ENCODE measurements at regions of chr5 and their contacts with region 1.

Region 1: DNA sequence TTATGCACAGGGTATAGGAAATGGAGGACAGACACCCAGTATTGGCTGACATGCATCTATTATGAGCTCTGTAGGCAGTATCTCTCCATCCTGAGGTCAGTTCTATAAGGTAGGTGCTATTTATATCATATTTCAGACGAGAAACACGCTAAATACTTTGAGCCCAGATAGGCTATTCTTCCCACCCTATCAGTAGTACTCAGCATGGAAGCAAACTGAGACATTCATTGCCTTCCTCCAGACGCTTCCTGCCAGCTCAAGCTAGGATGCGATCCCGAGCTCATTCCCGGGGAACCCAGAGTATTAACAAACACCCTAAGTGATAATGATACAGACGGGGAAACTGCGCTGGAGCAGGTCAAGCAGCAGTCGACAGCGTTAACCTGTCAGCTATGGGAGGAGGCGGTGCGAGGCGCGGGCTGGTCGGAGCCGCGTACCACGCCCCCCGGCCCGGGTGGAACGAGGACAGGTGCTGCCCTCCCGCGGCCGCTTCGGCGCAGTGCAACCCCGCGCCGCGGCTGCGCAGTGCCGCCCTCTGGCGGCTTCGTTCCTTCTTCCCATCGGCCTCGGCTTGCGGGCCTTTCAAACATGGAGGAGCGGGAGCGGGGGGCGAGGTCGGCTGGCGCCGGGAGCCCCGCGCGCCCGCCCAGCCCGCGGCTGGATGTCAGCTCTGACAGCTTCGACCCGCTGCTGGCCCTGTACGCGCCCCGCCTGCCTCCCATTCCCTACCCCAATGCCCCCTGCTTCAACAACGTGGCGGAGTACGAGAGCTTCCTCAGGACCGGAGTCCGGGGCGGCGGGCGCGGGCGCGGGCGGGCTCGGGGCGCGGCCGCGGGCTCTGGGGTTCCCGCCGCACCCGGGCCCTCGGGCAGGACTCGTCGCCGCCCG is at the start of gene LSM11:
- DNase-seq: peak; percentile 69 to 98
- H3K4me3 ChIP-seq: peak within 1 kb of the TSS; percentile 49 to 85 (median 70)
- H3K27ac ChIP-seq: no peak within 1 kb of the TSS
- H3K4me1 ChIP-seq: peaks cover 0 to 7% (median 0%) of the 10 kb centered on the region in 4 experiments; a peak in 3 of 7 replicates
- H3K27me3 ChIP-seq: peaks cover 0 to 13% (median 7%) of the 10 kb centered on the region in 4 experiments; a peak in 5 of 7 replicates
- CTCF ChIP-seq: peak; percentile 97 to 100 (median 99)
- EP300 ChIP-seq: peak in 1 of 2 experiments; percentile 37; a peak in 1 of 3 replicates
- POLR2A ChIP-seq: peak in 1 of 2 experiments; percentile 19; a peak in 1 of 3 replicates
- RAD21 ChIP-seq: peak; percentile 86 to 92
- total RNA-seq, gene LSM11: 3.4 and 3.9 TPM in 2 replicates

Region 2: DNA sequence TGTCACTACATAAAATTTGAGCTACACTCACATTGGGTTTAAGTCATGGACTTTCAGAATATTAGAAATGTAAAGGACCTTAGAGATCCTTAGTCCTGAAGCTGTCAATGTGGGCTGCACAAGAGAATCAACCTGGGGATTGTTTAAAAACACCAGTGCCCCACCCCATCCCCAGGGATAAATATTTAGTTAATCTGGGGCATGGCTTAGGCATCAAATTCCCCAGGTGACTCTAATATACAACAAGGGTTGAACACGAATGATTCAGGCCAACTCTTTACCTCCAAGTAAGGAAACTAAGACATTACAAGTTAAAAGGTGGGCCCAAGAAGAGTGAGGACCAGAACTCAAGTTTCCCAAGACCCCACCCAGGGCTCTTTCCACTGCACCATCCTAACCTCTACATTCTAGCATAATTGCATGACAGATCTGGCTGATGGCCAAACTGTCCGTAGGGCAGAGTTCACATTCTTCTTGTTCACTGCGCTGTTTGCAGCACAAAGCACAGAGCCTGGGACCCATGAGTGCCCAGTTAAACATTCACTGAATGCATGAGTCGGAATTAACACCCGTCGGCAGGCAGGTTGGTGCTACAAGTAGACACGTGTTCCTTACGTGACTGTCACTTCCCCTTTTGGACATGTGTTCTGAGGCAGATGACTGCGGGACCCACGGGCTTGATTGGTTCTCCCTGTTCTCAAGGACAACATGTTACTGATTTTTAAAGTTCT is 452.3 kb before region 1 on chr5:
- CTCF ChIA-PET with region 1: no interaction called
- POLR2A ChIA-PET with region 1: no interaction called
- DNase-seq: no peak
- H3K4me3 ChIP-seq: no peak overlapping the region
- H3K27ac ChIP-seq: no peak overlapping the region
- H3K4me1 ChIP-seq: no peaks in the 10 kb centered on the region; a peak in 1 of 7 replicates
- H3K27me3 ChIP-seq: no peaks in the 10 kb centered on the region
- CTCF ChIP-seq: no peak
- EP300 ChIP-seq: no peak
- POLR2A ChIP-seq: no peak
- RAD21 ChIP-seq: no peak

Region 3: GRCh38 chr5:157670662-157671591 is 72.5 kb before region 1 on chr5 and contains the start of gene C5orf52:
- CTCF ChIA-PET with region 1: interaction called, 57 read pairs
- POLR2A ChIA-PET with region 1: interaction called, 3 read pairs
- DNase-seq: no peak
- H3K4me3 ChIP-seq: peak within 1 kb of the TSS in 1 of 4 experiments; percentile 64; a peak in 2 of 8 replicates
- H3K27ac ChIP-seq: no peak within 1 kb of the TSS
- H3K4me1 ChIP-seq: no peaks in the 10 kb centered on the region
- H3K27me3 ChIP-seq: no peaks in the 10 kb centered on the region
- CTCF ChIP-seq: no peak
- EP300 ChIP-seq: no peak
- POLR2A ChIP-seq: no peak
- RAD21 ChIP-seq: no peak
- total RNA-seq, gene C5orf52: not detected in 2 replicates

Region 4: GRCh38 chr5:157681048-157681447 is 62.4 kb before region 1 on chr5:
- CTCF ChIA-PET with region 1: interaction called, 13 read pairs
- POLR2A ChIA-PET with region 1: no interaction called
- DNase-seq: no peak
- H3K4me3 ChIP-seq: no peak overlapping the region
- H3K27ac ChIP-seq: no peak overlapping the region
- H3K4me1 ChIP-seq: no peaks in the 10 kb centered on the region
- H3K27me3 ChIP-seq: no peaks in the 10 kb centered on the region
- CTCF ChIP-seq: no peak
- EP300 ChIP-seq: no peak
- POLR2A ChIP-seq: no peak
- RAD21 ChIP-seq: no peak

Region 5: GRCh38 chr5:157718519-157718918 is 24.9 kb before region 1 on chr5:
- CTCF ChIA-PET with region 1: interaction called, 19 read pairs
- POLR2A ChIA-PET with region 1: no interaction called
- DNase-seq: no peak
- H3K4me3 ChIP-seq: no peak overlapping the region
- H3K27ac ChIP-seq: no peak overlapping the region
- H3K4me1 ChIP-seq: no peaks in the 10 kb centered on the region
- H3K27me3 ChIP-seq: no peaks in the 10 kb centered on the region
- CTCF ChIP-seq: peak in 2 of 3 experiments; percentile 33 to 36; a peak in 3 of 4 replicates
- EP300 ChIP-seq: no peak
- POLR2A ChIP-seq: no peak
- RAD21 ChIP-seq: peak; percentile 68 to 69

Region 6: DNA sequence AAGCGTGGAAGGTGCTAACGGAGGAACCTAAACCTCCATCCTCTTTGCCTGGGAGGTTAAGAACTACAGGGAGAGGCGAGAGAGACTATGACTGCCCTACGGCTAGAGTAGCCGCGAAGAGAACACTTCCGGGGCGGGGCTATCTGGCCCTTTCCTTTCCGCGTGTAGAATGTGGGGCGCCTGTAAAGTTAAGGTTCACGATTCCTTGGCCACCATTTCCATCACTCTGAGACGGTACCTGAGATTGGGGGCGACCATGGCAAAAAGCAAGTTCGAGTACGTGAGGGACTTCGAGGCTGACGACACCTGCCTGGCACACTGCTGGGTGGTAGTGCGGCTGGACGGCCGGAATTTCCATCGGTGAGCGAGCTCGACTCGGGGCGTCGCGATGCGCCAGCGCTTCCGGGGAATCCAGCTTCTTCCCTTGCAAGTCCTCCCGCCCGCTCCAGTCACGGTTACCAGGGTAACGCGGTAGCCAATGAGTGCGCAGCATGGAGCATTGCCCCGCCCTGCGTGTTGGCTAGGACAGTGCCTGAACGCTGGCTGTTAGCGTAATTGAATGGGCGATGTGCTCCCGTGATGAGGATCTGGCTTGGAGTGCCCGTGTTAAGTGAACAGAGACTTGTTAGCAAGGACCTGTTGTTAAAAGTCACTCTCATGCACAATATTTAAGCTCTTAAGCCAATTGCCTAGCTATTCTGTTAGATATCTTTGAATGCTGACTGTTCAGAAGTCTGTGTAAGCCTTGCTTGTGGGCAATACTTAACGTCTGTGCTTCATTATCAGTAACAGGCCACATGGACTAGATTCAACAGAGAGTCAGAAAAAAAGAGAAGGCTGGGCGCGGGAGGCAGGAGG is 11.9 kb before region 1 on chr5 and contains the start of gene THG1L:
- CTCF ChIA-PET with region 1: interaction called, 9 read pairs
- POLR2A ChIA-PET with region 1: interaction called, 10 read pairs
- DNase-seq: peak; percentile 94 to 100
- H3K4me3 ChIP-seq: peak within 1 kb of the TSS; percentile 79 to 98 (median 90)
- H3K27ac ChIP-seq: peak within 1 kb of the TSS; percentile 96
- H3K4me1 ChIP-seq: no peaks in the 10 kb centered on the region
- H3K27me3 ChIP-seq: no peaks in the 10 kb centered on the region
- CTCF ChIP-seq: no peak
- EP300 ChIP-seq: no peak
- POLR2A ChIP-seq: peak; percentile 93 to 97
- RAD21 ChIP-seq: no peak
- total RNA-seq, gene THG1L: 12.4 and 13.0 TPM in 2 replicates

Region 7: DNA sequence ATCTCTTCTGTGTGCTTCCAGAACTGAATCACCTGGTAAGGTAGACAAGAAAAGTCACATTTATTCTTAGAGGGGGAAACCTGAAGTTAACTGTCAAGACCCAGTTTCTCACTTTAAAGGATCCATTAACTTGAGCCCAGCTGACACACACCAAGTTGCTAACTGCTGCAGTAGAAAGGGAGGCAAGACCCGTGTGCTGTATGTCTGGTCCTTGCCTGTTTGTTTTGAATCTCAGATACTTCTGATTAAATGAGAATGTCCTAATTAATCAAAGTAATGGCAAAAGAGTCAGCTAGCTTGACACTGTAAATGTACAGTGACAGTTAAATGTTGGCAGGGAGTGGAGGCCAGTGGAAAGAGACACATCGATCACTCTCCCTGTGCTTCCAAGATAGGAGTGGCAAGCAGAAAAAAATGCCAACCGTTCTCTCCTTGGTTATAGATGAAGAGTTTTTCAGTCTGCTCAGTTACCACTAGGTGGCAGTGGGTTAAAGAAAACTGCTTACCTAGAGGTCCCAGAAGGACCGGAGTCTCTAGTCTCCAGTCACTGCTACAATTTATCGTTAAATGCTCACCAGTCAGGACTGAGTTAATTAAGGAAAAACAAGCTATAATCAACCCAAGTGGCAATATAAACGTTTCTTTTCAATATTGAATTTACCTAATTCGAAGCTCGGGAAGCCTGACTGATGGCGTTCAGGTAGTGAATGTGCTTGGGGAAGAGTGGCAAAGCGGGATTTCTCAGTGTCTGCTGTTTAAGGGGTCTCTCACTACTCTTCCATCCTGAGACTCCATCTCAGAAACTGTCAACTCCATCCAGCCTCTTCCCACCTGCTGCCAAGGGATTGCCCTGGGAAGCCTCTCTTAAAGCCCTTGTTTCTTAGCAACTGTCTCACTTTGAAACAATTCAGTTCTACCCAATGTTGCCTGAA is 18.5 kb after region 1 on chr5:
- CTCF ChIA-PET with region 1: interaction called, 34 read pairs
- POLR2A ChIA-PET with region 1: interaction called, 5 read pairs
- DNase-seq: no peak
- H3K4me3 ChIP-seq: no peak overlapping the region
- H3K27ac ChIP-seq: no peak overlapping the region
- H3K4me1 ChIP-seq: no peaks in the 10 kb centered on the region
- H3K27me3 ChIP-seq: no peaks in the 10 kb centered on the region
- CTCF ChIP-seq: peak in 2 of 3 experiments; percentile 67 to 76; a peak in 3 of 4 replicates
- EP300 ChIP-seq: no peak
- POLR2A ChIP-seq: no peak
- RAD21 ChIP-seq: peak; percentile 84 to 88